ENCODE measurements at regions of chr12 and their contacts with region 1.

Region 1: DNA sequence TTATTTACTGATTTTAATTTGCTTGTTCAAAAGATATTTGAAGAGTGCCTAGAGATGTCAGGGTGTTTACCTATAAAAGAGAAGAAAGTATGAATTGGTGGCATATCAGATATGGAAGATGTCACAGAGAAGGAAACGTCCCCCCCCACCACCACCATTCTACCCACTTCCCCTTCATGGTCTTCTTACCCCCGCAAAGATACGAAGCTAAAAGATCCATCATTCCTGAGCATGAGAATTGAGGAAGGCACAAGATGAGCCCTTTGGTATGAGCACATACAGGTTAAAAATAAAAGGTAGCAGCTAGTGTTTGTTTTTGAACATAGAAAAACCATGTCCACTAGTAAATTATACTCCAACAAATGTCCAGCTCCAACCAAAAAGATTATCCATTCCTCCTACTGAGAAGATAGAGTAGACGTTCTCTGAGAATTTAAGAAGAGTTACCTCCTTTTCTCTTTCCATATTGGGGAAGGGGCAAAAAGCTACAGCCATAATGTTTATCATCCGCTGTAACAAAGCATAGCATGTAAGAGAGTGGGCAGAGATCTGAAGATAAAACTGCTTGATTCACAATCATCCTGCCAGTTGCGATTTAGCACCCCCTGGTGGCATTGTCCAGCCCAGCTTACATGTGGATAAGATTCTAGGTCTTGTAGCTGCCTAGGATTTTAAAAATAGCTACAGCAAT is 29.1 kb downstream of the NFYB start:
- DNase-seq: peak; percentile 83
- ATAC-seq: peak; percentile 63

Region 2: GRCh38 chr12:103877934-103878510 is 230.9 kb before region 1 on chr12:
- intact Hi-C with region 1: loop called (anchors 5 kb)
- DNase-seq: no peak
- ATAC-seq: peak; percentile 70

Region 3: DNA sequence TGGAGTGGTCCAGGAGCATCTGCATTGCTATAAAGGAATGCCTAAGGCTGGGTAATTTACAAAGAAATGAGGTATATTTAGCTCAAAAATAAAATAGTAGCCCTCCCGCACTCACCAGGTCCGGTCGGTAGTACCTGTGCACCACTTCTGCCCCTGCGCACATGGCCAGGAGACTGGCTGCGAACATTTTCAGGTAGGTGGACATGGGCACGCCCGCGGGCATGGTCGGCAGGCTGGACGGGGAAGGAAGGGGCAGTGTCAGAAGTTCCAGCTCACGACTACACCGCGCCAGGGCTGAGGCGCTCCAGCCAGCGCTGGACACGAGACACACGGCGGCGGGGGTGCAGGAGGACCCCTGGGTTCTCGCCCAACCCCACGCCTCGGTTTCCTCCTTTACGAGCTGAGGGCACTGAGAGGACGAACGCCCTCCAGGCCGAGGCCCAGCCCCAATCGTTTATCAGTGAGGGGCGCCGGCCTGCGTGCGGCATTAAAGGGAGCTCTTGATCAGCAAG is 152.3 kb before region 1 on chr12:
- intact Hi-C with region 1: loop called (anchors 5 kb)
- DNase-seq: peak; percentile 79
- ATAC-seq: peak; percentile 45

Region 4: DNA sequence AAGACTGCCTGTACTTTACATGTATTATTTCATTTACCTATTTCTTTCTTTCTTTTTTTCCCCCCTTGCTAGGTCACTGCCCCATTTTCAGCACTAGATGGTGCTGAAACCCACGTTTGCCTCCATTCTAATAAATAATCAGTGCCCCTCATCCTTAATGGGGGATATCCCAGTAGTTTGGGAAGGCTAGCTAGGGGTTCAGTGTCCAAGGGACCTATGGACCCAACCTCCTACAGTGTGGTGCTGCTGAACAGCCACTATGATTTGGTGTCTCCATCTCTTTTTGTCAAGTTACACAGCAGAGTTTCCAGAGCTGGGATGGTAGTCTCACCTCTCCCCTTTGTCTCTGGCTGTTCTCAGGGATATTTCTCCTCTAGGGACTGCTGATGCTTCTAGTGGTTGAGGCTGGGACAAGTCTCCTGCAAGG is 51.1 kb before region 1 on chr12:
- intact Hi-C with region 1: loop called (anchors 2 kb)
- DNase-seq: no peak
- ATAC-seq: no peak

Region 5: GRCh38 chr12:104207416-104208210 is 98.7 kb after region 1 on chr12:
- intact Hi-C with region 1: no loop called
- DNase-seq: no peak
- ATAC-seq: no peak

Region 6: GRCh38 chr12:104303538-104304151 is 194.7 kb after region 1 on chr12 and contains the start of gene EID3:
- intact Hi-C with region 1: no loop called
- DNase-seq: peak; percentile 95
- ATAC-seq: peak; percentile 100
- total RNA-seq, gene EID3: 0.49 TPM